ENCODE measurements at regions of chr4 and their contacts with region 1.

Region 1: DNA sequence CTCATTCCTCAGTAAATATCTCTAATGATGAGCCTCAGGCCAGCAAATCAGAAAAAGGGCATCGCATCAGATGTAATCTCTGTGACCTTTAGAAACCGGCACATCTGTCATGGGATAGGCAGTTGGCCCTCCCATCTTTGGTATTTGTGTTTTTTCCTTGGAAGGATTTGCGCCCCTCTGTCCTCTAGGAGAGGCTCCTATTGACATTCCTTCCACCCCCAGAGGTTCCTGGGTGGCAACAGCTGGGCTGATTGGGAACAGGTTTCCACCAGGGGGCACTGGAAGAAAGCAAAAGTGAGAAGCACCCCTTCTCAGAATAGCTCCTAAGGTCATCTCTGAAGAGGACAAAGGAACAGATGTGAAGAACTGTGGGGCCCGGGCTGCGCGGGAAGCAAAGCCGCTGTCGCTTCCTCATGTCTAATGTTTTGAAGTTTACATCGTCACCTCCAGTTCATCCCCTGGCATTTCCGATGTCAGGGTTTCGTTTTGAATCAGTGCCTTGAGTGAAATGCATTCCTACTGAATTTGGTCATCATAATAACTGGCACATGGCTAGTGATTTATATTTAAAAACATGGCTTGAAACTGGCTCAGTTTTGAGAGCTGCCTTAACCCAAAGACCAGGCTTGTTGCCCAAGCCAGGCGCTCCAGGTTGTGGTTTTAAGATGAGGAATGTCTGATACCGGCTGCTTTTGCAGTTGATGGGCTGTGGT is 6.2 kb downstream of the TXK start:
- DNase-seq: peak; percentile 91
- ATAC-seq: peak; percentile 76
- H3K4me3 Mint-ChIP-seq: peak overlapping the region; percentile 81
- H3K27ac Mint-ChIP-seq: peak overlapping the region; percentile 97
- H3K4me1 Mint-ChIP-seq: peaks cover 88% of the 10 kb centered on the region
- H3K27me3 Mint-ChIP-seq: no peaks in the 10 kb centered on the region

Region 2: DNA sequence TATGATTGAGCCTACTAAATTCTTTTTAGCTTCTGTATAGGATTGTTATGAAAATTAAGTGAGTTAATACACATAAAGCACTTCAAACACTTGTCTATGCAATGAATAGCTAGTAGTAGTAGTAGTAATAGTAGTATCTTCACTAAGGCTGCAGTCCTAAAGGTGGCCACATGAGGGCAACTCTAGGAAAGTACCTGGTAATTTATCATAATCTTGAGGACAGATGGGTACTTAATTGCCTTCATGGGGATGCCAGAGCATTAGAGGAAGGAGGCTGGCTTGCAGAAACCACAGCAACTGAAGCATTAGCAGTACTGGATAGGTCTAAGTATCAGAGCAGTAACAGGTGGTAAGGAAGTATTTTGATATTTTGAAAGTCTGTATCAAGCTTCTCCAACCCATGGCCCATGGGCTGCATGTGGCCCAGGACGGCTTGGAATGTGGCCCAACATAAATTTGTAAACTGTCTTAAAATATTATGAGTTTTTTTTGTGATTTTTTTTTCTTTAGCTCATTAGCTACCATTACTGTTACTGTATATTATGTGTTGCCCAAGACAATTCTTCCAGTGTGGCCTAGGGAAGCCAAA is 93.9 kb before region 1 on chr4:
- CTCF ChIA-PET with region 1: interaction called, 8 read pairs
- POLR2A ChIA-PET with region 1: interaction called, 4 read pairs
- intact Hi-C with region 1: loop called (anchors 1 kb)
- DNase-seq: peak; percentile 78
- ATAC-seq: peak; percentile 37
- H3K4me3 Mint-ChIP-seq: no peak overlapping the region
- H3K27ac Mint-ChIP-seq: peak overlapping the region; percentile 29
- H3K4me1 Mint-ChIP-seq: peaks cover 46% of the 10 kb centered on the region
- H3K27me3 Mint-ChIP-seq: no peaks in the 10 kb centered on the region

Region 3: DNA sequence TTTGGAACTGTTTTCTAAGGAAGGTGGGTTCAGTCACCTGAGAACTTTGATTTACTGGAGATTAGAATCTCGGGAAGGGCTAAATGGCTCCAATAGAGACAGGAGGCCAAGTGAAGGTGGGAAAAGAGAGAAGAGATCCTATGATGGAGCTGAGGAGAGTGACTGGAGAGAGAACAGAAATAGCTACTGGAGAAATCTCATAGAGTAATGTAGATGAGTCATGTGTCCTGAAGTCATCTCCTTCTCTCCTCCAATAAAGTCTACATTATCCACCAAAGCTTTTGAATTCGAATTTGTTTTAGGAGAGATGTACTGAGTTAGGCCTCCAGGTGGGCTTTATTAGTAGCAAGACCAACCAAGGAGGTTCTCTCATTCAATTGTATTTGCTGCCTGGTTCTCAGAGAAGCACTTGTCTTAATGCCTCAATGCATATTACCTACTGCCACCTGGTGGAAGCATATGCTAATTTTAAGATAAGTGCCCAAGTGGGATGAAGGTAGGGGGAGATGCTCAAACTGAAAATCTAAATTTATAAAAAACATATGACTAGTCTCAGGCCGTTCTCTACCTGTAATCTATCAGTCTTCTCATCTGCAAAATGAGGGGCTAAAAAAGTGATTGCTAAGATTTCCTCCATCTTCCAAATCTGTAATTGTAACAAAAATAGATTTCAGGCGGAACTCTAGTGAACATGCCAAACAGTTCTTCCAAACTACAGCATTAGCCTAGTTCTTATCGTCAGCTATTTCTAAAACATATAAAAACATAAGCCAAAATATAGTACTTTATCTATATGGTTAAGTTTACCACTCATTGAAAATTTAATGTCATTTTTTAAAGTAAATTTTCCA is 18.2 kb before region 1 on chr4:
- CTCF ChIA-PET with region 1: interaction called, 41 read pairs
- POLR2A ChIA-PET with region 1: interaction called, 4 read pairs
- intact Hi-C with region 1: no loop called
- DNase-seq: no peak
- ATAC-seq: peak; percentile 86
- H3K4me3 Mint-ChIP-seq: no peak overlapping the region
- H3K27ac Mint-ChIP-seq: peak overlapping the region; percentile 65
- H3K4me1 Mint-ChIP-seq: peaks cover 61% of the 10 kb centered on the region
- H3K27me3 Mint-ChIP-seq: no peaks in the 10 kb centered on the region

Region 4: DNA sequence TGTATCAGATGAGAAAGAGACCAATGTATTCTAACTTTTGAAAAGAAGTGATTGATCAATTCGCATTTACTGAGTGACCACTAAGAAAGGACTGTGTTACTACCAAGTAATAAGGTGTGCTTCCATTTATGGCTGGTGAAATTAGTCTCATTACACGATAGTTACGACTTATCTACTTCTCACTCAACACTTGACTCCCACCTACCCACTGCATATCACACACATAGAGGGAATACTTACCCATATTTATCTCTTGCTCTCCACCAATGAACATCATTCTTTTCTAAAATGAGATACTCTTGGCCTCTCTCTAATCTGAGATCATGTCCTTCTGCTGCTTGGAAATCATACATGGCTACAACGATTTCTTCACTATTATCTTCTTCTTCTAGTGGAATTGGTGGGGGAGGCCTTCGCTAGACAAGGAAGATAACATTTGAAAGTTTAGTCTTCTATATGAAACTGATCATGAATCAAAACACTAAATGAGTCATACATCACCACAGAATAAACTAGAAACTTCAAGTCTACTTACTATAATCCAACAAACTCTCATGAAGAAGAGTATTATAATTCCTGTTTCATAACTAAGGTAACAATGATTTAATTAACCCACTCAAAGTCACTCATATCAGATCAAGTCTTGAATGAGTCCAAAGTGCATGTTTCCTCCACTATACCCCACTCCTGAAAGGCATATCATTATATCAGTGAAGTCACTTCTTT is 39.9 kb after region 1 on chr4:
- CTCF ChIA-PET with region 1: interaction called, 5 read pairs
- POLR2A ChIA-PET with region 1: no interaction called
- intact Hi-C with region 1: loop called in 1 of 2 experiments (anchors 2 kb)
- DNase-seq: no peak
- ATAC-seq: peak; percentile 86
- H3K4me3 Mint-ChIP-seq: no peak overlapping the region
- H3K27ac Mint-ChIP-seq: no peak overlapping the region
- H3K4me1 Mint-ChIP-seq: peaks cover 13% of the 10 kb centered on the region
- H3K27me3 Mint-ChIP-seq: no peaks in the 10 kb centered on the region

Region 5: DNA sequence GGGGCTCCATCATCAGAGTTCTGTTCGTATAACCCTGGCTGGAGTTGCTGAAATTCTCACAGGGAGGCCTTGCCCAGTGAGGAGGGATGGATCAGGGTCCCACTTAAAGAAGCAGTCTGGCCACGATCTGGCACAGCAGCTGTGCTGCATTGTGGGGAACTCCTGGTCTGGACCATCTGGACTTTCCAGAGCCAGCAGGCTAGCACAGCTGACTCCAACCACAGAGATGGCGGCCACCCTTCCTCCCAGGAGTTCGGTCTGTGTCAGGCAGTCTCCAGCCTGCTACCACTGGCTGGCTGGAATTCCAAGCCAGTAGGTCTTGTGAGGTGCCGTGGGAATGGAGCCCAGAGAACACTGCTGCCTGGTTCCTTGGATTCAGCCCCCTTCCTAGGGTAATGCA is 275.5 kb after region 1 on chr4:
- CTCF ChIA-PET with region 1: no interaction called
- POLR2A ChIA-PET with region 1: no interaction called
- intact Hi-C with region 1: no loop called
- DNase-seq: no peak
- ATAC-seq: no peak
- H3K4me3 Mint-ChIP-seq: no peak overlapping the region
- H3K27ac Mint-ChIP-seq: no peak overlapping the region
- H3K4me1 Mint-ChIP-seq: peaks cover 32% of the 10 kb centered on the region
- H3K27me3 Mint-ChIP-seq: no peaks in the 10 kb centered on the region

Region 6: DNA sequence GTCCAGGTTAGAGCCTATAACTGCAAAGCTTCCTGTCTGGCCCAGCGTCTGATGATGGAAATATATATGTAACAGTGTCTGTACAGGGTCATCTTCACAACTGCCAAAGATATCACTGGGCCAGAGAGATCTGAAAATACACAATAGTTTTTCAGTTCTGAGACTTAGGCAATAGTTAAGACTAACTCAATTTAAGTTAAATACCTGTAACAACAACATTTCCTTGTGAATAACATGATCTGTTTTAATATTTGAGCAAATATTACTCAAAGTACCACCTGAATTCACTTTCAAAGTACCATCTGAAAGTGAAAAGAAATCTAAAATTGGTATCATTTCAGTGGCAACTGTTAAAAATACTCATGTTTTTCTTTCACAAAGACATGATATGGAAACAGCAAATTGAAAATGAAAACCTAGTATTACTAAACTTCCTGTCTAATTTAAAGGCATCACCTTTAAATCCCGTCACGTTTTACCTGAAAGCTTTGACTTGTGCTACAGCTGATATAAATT is 371.8 kb after region 1 on chr4:
- CTCF ChIA-PET with region 1: interaction called, 4 read pairs
- POLR2A ChIA-PET with region 1: no interaction called
- intact Hi-C with region 1: loop called in 1 of 2 experiments (anchors 2 kb)
- DNase-seq: no peak
- ATAC-seq: peak; percentile 73
- H3K4me3 Mint-ChIP-seq: no peak overlapping the region
- H3K27ac Mint-ChIP-seq: no peak overlapping the region
- H3K4me1 Mint-ChIP-seq: peaks cover 17% of the 10 kb centered on the region
- H3K27me3 Mint-ChIP-seq: no peaks in the 10 kb centered on the region

Measured in activated CD4-positive, alpha-beta T cell treated with anti-CD3 and anti-CD28 coated beads for 36 hours (primary cell).